ENCODE measurements at regions of chr13 and their contacts with region 1.

Region 1: DNA sequence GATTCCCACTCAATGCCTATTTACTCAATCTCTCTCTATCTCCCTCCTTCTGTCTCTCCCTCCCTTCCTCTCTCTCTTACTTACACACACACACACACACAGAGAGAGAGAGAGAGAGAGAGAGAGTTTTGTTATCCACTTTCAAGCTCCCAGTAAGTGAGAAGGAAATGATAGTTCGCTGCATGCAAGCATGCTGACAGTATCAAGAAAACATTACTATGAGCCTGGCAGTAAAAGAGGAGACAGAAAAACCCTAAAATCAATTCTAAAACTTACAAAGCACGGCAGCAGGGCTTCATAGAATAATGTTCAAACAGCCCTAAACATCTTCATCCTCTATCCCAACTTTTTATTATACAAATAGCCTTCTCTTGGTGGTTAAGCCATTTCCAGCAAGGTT is 171.9 kb downstream of the FOXO1 start:
- DNase-seq: peak in 2 of 9 experiments; percentile 45 to 70
- ATAC-seq: peak; percentile 53
- H3K4me3 ChIP-seq: peak overlapping the region; percentile 19 to 29
- H3K4me3 Mint-ChIP-seq: peak overlapping the region; percentile 78
- H3K27ac ChIP-seq: peak overlapping the region; percentile 36 to 56
- H3K27ac Mint-ChIP-seq: peak overlapping the region; percentile 97
- H3K4me1 ChIP-seq: peaks cover 78% of the 10 kb centered on the region
- H3K4me1 Mint-ChIP-seq: peaks cover 88% of the 10 kb centered on the region
- H3K27me3 ChIP-seq: no peaks in the 10 kb centered on the region
- H3K27me3 Mint-ChIP-seq: no peaks in the 10 kb centered on the region
- CTCF ChIP-seq: no peak

Region 2: GRCh38 chr13:40508127-40508526 is 13.6 kb after region 1 on chr13:
- CTCF ChIA-PET with region 1: interaction called, 3 read pairs
- POLR2A ChIA-PET with region 1: interaction called, 6 read pairs
- intact Hi-C with region 1: loop called in 1 of 2 experiments (anchors 2 kb)
- DNase-seq: peak in 2 of 9 experiments; percentile 41 to 67
- ATAC-seq: peak; percentile 38
- H3K4me3 ChIP-seq: no peak overlapping the region
- H3K4me3 Mint-ChIP-seq: peak overlapping the region; percentile 9
- H3K27ac ChIP-seq: peak overlapping the region in 1 of 2 experiments; percentile 6
- H3K27ac Mint-ChIP-seq: peak overlapping the region; percentile 71
- H3K4me1 ChIP-seq: peaks cover 40% of the 10 kb centered on the region
- H3K4me1 Mint-ChIP-seq: peaks cover 59% of the 10 kb centered on the region
- H3K27me3 ChIP-seq: no peaks in the 10 kb centered on the region
- H3K27me3 Mint-ChIP-seq: no peaks in the 10 kb centered on the region
- CTCF ChIP-seq: no peak

Region 3: GRCh38 chr13:40578055-40578454 is 83.5 kb after region 1 on chr13:
- CTCF ChIA-PET with region 1: no interaction called
- POLR2A ChIA-PET with region 1: no interaction called
- intact Hi-C with region 1: no loop called
- DNase-seq: no peak
- ATAC-seq: no peak
- H3K4me3 ChIP-seq: no peak overlapping the region
- H3K4me3 Mint-ChIP-seq: peak overlapping the region; percentile 26
- H3K27ac ChIP-seq: no peak overlapping the region
- H3K27ac Mint-ChIP-seq: peak overlapping the region; percentile 39
- H3K4me1 ChIP-seq: peaks cover 95% of the 10 kb centered on the region
- H3K4me1 Mint-ChIP-seq: peaks cover 96% of the 10 kb centered on the region
- H3K27me3 ChIP-seq: no peaks in the 10 kb centered on the region
- H3K27me3 Mint-ChIP-seq: no peaks in the 10 kb centered on the region
- CTCF ChIP-seq: no peak

Region 4: DNA sequence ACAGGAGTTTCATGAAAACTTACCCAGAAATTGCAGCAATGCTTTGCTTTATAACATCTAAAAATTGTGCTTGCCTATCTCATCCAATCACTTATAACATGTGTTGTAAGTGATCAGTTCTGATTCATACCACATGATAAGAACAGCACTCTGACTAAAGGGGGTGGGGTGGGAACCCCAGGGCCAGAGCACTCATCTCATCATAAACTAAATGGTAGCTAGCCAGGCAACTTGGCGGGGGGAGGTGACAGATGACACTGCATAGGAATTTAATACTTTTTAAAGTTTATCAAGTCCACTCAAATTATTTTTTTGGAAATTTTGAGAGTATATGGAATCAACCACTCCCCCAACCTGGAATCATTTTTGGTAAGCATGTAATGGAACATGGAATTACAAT is 129.9 kb after region 1 on chr13:
- CTCF ChIA-PET with region 1: no interaction called
- POLR2A ChIA-PET with region 1: no interaction called
- intact Hi-C with region 1: no loop called
- DNase-seq: peak in 4 of 9 experiments; percentile 23 to 45 (median 32)
- ATAC-seq: peak; percentile 68
- H3K4me3 ChIP-seq: no peak overlapping the region
- H3K4me3 Mint-ChIP-seq: peak overlapping the region; percentile 40
- H3K27ac ChIP-seq: no peak overlapping the region
- H3K27ac Mint-ChIP-seq: peak overlapping the region; percentile 71
- H3K4me1 ChIP-seq: peaks cover 83% of the 10 kb centered on the region
- H3K4me1 Mint-ChIP-seq: peaks cover 85% of the 10 kb centered on the region
- H3K27me3 ChIP-seq: no peaks in the 10 kb centered on the region
- H3K27me3 Mint-ChIP-seq: no peaks in the 10 kb centered on the region
- CTCF ChIP-seq: no peak

Measured in CD8-positive, alpha-beta T cell (primary cell).